Calu3 (cell line): ENCODE measurements at regions of chr11 and their contacts with region 1.

Region 1: GRCh38 chr11:110376711-110377324 is 52.9 kb upstream of the FDX1 start:
- DNase-seq: peak; percentile 75
- H3K4me3 Mint-ChIP-seq: no peak overlapping the region
- H3K27ac Mint-ChIP-seq: no peak overlapping the region
- H3K4me1 Mint-ChIP-seq: peaks cover 15% of the 10 kb centered on the region
- H3K27me3 Mint-ChIP-seq: no peaks in the 10 kb centered on the region
- CTCF ChIP-seq: no peak

Region 2: DNA sequence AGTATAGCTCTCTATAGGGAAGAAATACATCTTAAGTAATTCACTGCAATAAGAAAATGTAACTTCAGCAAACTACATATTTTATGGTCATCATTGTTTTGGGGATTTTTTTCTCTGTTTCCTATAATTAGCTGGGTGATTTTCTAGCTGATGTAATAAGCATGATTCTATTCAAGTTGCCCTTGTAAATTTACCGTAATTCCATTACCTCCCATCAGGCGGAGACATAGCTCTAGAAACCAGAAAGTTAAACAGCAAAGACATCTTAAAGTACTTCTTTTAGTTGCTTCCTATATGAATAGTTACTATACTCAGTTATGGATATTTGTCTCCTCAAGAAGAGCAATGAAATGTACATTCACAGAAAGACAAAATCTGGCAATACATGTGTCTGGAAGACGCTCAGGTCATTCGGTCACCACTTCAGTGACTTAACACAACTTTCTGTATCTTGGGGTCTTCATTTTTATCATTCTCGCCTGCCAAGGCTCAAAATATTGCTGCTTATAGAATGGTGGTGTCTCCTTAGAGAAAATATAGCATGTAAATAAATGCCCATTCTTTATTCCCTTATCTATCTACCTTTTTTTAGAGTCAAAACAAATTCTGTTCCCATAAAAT is 523.6 kb before region 1 on chr11:
- CTCF ChIA-PET with region 1: no interaction called
- intact Hi-C with region 1: loop called (anchors 10 kb)
- DNase-seq: peak; percentile 34
- H3K4me3 Mint-ChIP-seq: no peak overlapping the region
- H3K27ac Mint-ChIP-seq: no peak overlapping the region
- H3K4me1 Mint-ChIP-seq: peaks cover 6% of the 10 kb centered on the region
- H3K27me3 Mint-ChIP-seq: no peaks in the 10 kb centered on the region
- CTCF ChIP-seq: peak; percentile 23

Region 3: DNA sequence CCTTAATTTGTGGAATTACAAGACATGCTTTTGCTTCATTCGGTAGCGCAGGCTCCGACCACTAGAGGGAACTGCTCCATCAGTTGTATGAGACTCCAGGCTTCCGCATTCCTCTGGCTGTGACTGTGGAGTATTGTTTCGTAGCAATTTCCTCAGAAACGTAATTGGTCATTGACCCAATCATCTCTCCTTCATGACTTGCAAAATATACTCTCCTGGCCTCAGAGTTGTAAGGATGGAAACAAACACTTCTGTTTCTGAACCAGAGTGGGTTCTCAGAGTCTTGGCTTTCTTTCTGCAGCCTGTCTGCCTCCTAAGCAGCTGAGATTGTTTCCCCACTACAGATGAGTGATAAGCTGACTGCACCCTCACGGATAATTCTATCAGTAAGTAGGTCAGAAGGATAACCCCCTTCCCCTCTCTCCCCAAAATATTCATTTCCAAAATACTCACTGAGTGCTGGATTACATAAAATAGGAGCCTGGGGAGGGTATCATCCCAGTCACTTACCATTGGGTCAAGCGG is 430.4 kb before region 1 on chr11:
- CTCF ChIA-PET with region 1: no interaction called
- intact Hi-C with region 1: loop called (anchors 1 kb)
- DNase-seq: peak; percentile 76
- H3K4me3 Mint-ChIP-seq: peak overlapping the region; percentile 35
- H3K27ac Mint-ChIP-seq: peak overlapping the region; percentile 19
- H3K4me1 Mint-ChIP-seq: peaks cover 10% of the 10 kb centered on the region
- H3K27me3 Mint-ChIP-seq: no peaks in the 10 kb centered on the region
- CTCF ChIP-seq: peak; percentile 44

Region 4: DNA sequence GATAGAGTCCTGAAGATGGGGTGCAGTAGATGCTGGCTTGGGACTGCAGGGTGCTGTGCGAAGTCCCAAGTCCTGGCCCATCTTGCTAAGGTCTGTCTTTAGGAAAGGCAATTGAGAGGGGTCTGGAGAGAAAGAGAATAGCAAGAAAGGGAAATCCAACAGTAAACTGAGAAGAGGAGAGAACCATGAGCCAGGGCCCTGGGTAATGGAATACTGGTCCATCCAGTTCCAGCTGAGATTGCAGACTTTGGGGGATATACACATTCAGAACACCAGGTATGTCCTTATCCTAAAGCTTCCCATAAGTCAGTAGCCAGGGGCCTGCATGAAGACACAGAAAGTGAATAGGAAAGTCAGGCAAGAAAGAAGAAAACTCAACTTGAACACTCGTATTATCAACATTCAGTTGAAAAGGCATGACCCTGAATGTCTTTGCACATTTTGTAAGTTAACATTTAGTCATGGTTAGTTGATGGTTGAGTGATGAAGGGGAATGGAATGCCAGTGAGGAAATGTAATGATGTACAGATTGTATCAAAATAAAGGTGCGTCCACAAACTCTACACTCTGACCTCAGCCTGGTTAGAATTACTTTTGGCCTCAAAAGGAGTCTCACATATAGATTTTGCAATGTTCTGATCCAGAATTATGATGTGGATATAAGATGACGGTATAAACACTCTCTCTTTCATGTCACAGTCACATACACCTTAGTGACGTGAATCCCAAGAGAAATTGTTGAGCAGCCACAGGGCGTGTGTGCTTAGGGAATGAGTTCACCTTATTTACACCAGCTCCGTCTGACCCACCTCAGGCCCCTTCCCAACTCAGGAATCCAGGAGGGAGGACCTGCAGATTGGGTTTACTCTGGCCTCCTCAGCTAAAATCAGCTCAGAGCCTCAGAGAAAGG is 180.7 kb before region 1 on chr11:
- CTCF ChIA-PET with region 1: no interaction called
- intact Hi-C with region 1: loop called (anchors 2 kb)
- DNase-seq: no peak
- H3K4me3 Mint-ChIP-seq: peak overlapping the region; percentile 8
- H3K27ac Mint-ChIP-seq: peak overlapping the region; percentile 88
- H3K4me1 Mint-ChIP-seq: peaks cover 57% of the 10 kb centered on the region
- H3K27me3 Mint-ChIP-seq: no peaks in the 10 kb centered on the region
- CTCF ChIP-seq: no peak